Breast epithelium (tissue), 4 donors: ENCODE measurements at regions of chr12 and their contacts with region 1.

Region 1: GRCh38 chr12:32051559-32052414 is 54.9 kb upstream of the BICD1 start:
- DNase-seq: no peak
- H3K4me3 ChIP-seq: no peak overlapping the region
- H3K27ac ChIP-seq: no peak overlapping the region
- H3K4me1 ChIP-seq: no peaks in the 10 kb centered on the region
- H3K27me3 ChIP-seq: no peaks in the 10 kb centered on the region
- CTCF ChIP-seq: no peak
- POLR2A ChIP-seq: no peak

Region 2: DNA sequence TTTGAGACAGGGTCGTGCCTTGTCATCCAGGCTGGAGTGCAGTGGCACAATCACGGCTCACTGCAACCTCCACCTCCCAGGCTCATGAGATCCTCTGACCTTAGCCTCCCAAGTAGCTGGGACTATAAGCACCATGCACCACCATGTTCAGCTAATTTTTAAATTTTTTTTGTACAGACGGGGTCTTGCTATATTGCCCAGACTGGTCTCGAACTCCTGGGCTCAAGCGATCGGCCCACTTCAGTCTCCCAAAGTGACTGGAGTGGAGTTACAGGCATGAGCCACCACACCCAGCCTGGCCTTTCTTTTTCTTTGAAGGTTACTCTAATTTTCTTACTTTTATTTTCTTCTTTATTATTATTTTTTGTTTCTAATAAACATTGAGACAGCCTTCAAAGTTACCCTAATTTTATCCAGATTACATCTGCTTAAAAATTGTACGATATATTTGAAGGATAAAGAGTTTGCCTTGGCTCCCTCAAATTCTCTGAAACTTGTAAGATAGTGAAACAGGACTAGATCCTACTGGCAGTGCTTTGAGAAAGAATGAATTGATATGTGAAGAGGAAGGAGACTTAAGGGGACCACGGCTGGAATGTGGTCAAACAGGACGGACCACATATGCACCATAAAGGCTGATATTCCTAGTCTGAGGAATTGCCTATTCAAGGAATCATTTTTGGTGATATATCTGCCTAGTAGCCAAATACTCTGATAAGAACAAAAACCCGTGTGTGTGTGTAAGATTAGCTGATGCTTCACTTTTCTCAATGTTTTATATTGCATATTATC is 711.8 kb before region 1 on chr12:
- intact Hi-C with region 1: no loop called
- DNase-seq: no peak
- H3K4me3 ChIP-seq: no peak overlapping the region
- H3K27ac ChIP-seq: no peak overlapping the region
- H3K4me1 ChIP-seq: no peaks in the 10 kb centered on the region
- H3K27me3 ChIP-seq: no peaks in the 10 kb centered on the region
- CTCF ChIP-seq: no peak
- POLR2A ChIP-seq: no peak

Region 3: GRCh38 chr12:31659087-31659933 is 392.5 kb before region 1 on chr12 and contains the start of gene ETFBKMT:
- intact Hi-C with region 1: loop called (anchors 2 kb)
- DNase-seq: peak; percentile 85 to 92
- H3K4me3 ChIP-seq: peak within 1 kb of the TSS; percentile 54 to 93 (median 80)
- H3K27ac ChIP-seq: peak within 1 kb of the TSS; percentile 97 to 98
- H3K4me1 ChIP-seq: no peaks in the 10 kb centered on the region
- H3K27me3 ChIP-seq: no peaks in the 10 kb centered on the region
- CTCF ChIP-seq: peak; percentile 23 to 60 (median 50)
- POLR2A ChIP-seq: no peak
- total RNA-seq, gene ETFBKMT: 3.0 to 4.9 (median 4.8) TPM

Region 4: DNA sequence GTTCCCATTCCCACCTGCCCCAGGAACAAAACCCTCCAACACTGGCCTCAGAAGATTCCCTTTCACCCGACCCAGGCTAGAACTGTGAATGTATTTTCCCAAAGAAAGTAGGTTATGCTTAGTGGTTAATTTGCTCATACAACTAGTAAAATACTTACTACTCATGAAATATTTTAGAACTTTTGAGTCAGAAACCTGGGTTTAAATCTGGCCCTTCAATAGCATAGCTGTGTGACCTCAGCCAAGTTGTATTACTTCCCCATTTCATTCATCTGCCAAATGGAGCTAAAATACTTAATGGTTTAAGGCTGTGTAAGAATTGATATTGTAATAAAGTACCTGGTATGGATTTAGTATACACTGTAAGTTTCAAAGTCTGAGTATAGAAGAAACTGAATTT is 558.2 kb after region 1 on chr12:
- intact Hi-C with region 1: loop called (anchors 5 kb)
- DNase-seq: no peak
- H3K4me3 ChIP-seq: no peak overlapping the region
- H3K27ac ChIP-seq: no peak overlapping the region
- H3K4me1 ChIP-seq: no peaks in the 10 kb centered on the region
- H3K27me3 ChIP-seq: no peaks in the 10 kb centered on the region
- CTCF ChIP-seq: no peak
- POLR2A ChIP-seq: no peak

Region 5: DNA sequence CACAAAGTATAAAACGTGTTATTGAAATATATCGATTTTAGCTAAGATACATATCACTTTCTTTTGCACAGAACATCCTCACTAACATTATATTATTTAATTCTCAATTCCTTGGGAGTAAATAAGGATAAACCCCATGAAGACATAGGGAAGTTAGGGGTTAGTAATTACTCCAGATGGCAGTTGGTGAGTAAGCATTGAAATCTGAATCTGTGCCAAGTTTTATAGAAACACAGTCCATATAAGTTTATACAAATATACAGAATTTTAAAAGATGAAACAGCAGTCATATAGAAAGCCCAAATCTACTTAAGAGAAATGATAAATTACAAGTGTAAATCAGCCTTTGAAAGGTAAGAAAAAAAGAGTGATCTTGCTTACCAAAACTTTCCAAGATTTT is 1588.2 kb after region 1 on chr12:
- intact Hi-C with region 1: no loop called
- DNase-seq: no peak
- H3K4me3 ChIP-seq: no peak overlapping the region
- H3K27ac ChIP-seq: no peak overlapping the region
- H3K4me1 ChIP-seq: no peaks in the 10 kb centered on the region
- H3K27me3 ChIP-seq: no peaks in the 10 kb centered on the region
- CTCF ChIP-seq: no peak
- POLR2A ChIP-seq: no peak